ENCODE measurements at regions of chr1 and their contacts with region 1.

Region 1: DNA sequence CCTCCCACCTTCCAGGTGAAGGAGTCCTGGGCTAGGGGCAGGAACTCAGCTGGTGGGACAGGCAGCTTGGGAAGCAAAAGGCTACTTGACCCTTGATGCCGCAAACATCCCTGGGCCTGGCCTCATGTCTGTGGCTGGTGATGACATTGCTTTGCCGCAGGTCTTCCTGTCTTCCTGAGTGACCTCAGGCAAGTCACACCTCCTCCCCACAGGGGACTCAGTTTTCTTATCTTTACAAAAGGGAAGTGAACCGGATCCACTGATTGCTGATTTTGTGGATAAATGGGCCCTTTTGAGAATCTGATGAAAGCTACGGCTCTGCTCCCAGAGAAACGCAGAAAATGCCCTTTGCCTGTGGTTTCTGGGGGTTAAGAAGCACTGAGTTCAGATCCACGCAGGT is 20.7 kb downstream of the PLOD1 start:
- DNase-seq: no peak
- H3K4me3 ChIP-seq: no peak overlapping the region
- H3K27ac ChIP-seq: no peak overlapping the region
- H3K4me1 ChIP-seq: no peaks in the 10 kb centered on the region
- H3K27me3 ChIP-seq: no peaks in the 10 kb centered on the region
- CTCF ChIP-seq: no peak

Region 2: GRCh38 chr1:11913291-11913690 is 41.9 kb before region 1 on chr1:
- intact Hi-C with region 1: loop called (anchors 5 kb)
- DNase-seq: no peak
- H3K4me3 ChIP-seq: no peak overlapping the region
- H3K27ac ChIP-seq: no peak overlapping the region
- H3K4me1 ChIP-seq: no peaks in the 10 kb centered on the region
- H3K27me3 ChIP-seq: no peaks in the 10 kb centered on the region
- CTCF ChIP-seq: no peak

Measured in colonic mucosa (tissue), 4 donors.